Right ventricle myocardium inferior (tissue), 1 donor: ENCODE measurements at regions of chr5 and their contacts with region 1.

Region 1: DNA sequence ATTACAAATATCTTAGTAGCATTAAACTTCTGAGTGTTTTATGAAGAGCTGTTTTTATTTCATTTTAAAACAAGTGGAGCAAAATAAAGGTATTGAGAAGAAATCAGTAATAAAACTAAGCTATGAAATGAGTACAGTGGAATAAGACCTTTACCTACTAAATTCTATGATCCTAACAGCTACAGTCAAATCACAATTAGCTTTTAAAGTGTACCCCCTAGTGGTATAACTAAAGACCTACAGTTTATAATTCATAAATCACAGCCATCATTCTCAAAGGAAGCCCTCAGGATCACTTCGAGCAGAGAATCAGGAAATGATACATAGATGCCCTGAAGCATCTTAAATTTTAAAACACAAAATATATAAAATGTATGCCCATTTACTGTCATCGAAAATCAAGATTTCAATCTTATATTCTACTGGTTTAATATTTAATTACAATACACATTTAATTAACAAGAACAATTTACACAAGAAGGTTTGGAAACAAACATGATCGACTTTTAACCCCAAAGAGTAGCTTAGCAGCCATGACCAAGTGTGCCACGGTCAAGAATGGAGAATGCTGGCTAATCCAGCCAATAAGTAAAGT is 12.3 kb downstream of the CCNH start:
- DNase-seq: no peak
- ATAC-seq: peak; percentile 52

Region 2: DNA sequence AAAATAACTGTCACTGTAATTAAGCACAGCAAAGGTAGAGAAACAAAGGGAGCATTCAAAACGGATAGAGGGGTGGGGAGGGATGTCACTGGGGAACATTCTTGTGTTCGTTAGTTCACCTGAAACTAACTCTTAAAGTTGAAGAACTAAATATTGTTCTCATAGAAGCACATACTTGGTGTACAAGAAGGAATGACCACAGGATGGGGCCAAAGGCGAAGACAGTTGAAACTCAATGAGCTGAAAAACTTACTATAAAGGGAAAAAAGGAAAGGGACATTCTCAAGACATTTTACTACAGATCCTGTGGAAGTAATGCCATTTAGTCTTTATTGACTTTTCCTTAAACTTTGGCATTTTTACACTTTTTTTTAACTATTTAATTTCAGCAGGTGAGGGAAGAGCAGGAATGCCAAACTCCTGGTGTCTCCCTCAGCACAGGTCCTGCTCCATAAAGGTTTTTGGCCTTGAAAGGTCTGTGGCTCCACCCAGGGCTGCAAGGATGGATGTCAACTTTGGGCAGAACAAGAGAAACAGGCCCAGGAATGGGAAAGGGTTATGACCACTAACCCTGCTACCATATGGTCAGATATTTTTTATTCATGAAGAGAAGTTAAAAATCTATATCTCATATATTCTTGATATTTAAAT is 330.3 kb before region 1 on chr5:
- intact Hi-C with region 1: loop called (anchors 10 kb)
- DNase-seq: no peak
- ATAC-seq: peak; percentile 50

Region 3: GRCh38 chr5:87722286-87722685 is 321.9 kb after region 1 on chr5:
- intact Hi-C with region 1: no loop called
- DNase-seq: no peak
- ATAC-seq: no peak